H1 (cell line): ENCODE measurements at regions of chr10 and their contacts with region 1.

Region 1: GRCh38 chr10:15901889-15902288 is 41.6 kb upstream of the MINDY3 start:
- DNase-seq: peak in 1 of 2 experiments; percentile 25
- H3K4me3 ChIP-seq: no peak overlapping the region
- H3K27ac ChIP-seq: no peak overlapping the region
- H3K4me1 ChIP-seq: no peaks in the 10 kb centered on the region
- H3K27me3 ChIP-seq: no peaks in the 10 kb centered on the region
- CTCF ChIP-seq: no peak
- EP300 ChIP-seq: no peak
- POLR2A ChIP-seq: no peak
- RAD21 ChIP-seq: no peak

Region 2: DNA sequence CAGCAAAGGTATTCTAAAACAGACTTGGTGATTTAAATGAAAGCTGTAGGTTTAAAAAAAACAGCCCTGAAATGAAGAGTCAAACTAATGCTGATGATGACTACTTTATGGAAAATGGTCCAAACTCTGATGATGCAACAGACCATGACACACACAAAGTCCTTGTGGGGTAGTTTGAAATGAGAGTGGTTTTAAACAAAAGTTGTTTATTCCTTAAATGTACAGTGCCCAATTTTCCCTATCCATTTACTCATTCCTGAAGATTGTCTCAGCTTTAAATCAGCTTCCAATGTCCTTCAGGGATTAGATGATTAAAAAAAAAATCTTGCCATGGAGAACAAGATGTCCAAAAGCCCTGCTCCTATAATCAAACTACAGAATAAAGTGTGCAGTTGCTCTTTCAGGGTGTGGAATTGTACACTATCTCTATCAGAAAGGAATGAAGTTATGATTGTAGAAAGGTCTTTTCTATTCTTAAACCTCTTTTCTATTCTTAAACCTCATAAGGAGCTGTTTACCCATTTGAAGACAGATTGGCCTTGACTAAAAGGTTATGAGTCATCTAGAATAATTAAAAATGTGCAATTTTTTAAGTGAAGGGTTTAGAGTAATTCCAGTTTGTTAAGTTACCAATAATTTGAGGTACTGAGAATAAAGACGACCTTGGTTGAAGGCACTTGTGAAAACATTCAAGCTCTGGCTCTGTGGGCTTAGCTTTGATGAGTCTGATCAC is 111.9 kb before region 1 on chr10:
- CTCF ChIA-PET with region 1: no interaction called
- POLR2A ChIA-PET with region 1: no interaction called
- DNase-seq: no peak
- H3K4me3 ChIP-seq: no peak overlapping the region
- H3K27ac ChIP-seq: no peak overlapping the region
- H3K4me1 ChIP-seq: peaks cover 0 to 2% (median under 1%) of the 10 kb centered on the region in 4 experiments; a peak in 1 of 7 replicates
- H3K27me3 ChIP-seq: no peaks in the 10 kb centered on the region
- CTCF ChIP-seq: no peak
- EP300 ChIP-seq: no peak
- POLR2A ChIP-seq: no peak
- RAD21 ChIP-seq: no peak

Region 3: DNA sequence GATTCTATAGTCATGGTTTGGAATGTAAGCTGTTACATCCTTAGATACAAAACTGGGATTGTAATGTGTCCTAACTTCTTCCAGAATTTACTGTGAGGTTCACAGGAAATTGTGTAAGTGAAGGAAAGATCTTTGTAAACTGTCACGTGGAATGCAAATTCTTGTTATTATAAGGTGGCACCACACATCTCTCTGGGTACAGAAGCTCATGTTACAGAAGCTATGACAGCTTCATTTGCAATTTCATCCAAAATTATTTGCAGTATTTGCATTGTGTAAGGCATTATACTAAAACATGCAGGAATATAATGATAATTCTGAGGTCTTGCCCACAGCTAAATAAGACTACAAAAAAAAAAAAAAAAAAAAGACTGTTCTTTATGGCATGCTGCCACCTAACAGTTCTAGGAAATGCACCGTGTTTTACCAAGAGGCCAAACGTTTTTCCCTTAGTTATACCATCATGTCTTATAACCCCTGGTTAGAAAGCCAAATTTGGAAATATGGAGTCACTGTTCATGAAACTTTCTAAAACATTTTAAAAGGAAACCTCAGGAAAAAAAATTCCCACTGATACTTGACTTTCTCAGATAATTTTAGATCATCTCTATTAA is 59.2 kb before region 1 on chr10:
- CTCF ChIA-PET with region 1: no interaction called
- POLR2A ChIA-PET with region 1: no interaction called
- DNase-seq: no peak
- H3K4me3 ChIP-seq: no peak overlapping the region
- H3K27ac ChIP-seq: no peak overlapping the region
- H3K4me1 ChIP-seq: no peaks in the 10 kb centered on the region
- H3K27me3 ChIP-seq: peaks cover 0 to 2% (median 0%) of the 10 kb centered on the region in 4 experiments; a peak in 1 of 7 replicates
- CTCF ChIP-seq: no peak
- EP300 ChIP-seq: no peak
- POLR2A ChIP-seq: no peak
- RAD21 ChIP-seq: no peak

Region 4: GRCh38 chr10:15868016-15868415 is 33.9 kb before region 1 on chr10:
- CTCF ChIA-PET with region 1: no interaction called
- POLR2A ChIA-PET with region 1: no interaction called
- DNase-seq: no peak
- H3K4me3 ChIP-seq: no peak overlapping the region
- H3K27ac ChIP-seq: no peak overlapping the region
- H3K4me1 ChIP-seq: no peaks in the 10 kb centered on the region
- H3K27me3 ChIP-seq: peaks cover 4 to 43% (median 21%) of the 10 kb centered on the region in 4 experiments
- CTCF ChIP-seq: no peak
- EP300 ChIP-seq: no peak
- POLR2A ChIP-seq: no peak
- RAD21 ChIP-seq: no peak

Region 5: GRCh38 chr10:15881542-15881941 is 20.3 kb before region 1 on chr10:
- CTCF ChIA-PET with region 1: interaction called, 16 read pairs
- POLR2A ChIA-PET with region 1: no interaction called
- DNase-seq: no peak
- H3K4me3 ChIP-seq: no peak overlapping the region
- H3K27ac ChIP-seq: no peak overlapping the region
- H3K4me1 ChIP-seq: peaks cover 2 to 10% (median 3%) of the 10 kb centered on the region in 4 experiments; a peak in 5 of 7 replicates
- H3K27me3 ChIP-seq: no peaks in the 10 kb centered on the region
- CTCF ChIP-seq: no peak
- EP300 ChIP-seq: no peak
- POLR2A ChIP-seq: no peak
- RAD21 ChIP-seq: no peak

Region 6: DNA sequence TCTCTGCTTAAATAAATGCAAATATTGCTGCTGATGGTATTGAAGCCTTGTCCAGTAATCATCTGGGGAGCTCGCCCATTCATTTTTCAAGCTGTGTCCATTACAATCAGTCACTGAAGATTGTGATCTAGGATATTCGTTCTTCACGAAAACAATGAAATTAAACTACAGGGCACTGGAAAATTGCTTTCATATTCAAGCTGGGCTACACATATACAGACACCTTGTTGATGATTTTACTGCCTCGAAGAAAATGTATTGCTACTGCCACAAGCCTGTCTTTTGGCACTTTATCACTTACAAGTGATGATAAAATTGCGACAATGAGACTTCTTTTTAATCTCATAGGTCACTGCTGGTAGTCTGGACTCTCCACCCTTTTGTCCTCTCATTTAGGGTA is 58.4 kb after region 1 on chr10:
- CTCF ChIA-PET with region 1: no interaction called
- POLR2A ChIA-PET with region 1: no interaction called
- DNase-seq: no peak
- H3K4me3 ChIP-seq: no peak overlapping the region
- H3K27ac ChIP-seq: no peak overlapping the region
- H3K4me1 ChIP-seq: no peaks in the 10 kb centered on the region
- H3K27me3 ChIP-seq: no peaks in the 10 kb centered on the region
- CTCF ChIP-seq: no peak
- EP300 ChIP-seq: no peak
- POLR2A ChIP-seq: no peak
- RAD21 ChIP-seq: no peak

Region 7: DNA sequence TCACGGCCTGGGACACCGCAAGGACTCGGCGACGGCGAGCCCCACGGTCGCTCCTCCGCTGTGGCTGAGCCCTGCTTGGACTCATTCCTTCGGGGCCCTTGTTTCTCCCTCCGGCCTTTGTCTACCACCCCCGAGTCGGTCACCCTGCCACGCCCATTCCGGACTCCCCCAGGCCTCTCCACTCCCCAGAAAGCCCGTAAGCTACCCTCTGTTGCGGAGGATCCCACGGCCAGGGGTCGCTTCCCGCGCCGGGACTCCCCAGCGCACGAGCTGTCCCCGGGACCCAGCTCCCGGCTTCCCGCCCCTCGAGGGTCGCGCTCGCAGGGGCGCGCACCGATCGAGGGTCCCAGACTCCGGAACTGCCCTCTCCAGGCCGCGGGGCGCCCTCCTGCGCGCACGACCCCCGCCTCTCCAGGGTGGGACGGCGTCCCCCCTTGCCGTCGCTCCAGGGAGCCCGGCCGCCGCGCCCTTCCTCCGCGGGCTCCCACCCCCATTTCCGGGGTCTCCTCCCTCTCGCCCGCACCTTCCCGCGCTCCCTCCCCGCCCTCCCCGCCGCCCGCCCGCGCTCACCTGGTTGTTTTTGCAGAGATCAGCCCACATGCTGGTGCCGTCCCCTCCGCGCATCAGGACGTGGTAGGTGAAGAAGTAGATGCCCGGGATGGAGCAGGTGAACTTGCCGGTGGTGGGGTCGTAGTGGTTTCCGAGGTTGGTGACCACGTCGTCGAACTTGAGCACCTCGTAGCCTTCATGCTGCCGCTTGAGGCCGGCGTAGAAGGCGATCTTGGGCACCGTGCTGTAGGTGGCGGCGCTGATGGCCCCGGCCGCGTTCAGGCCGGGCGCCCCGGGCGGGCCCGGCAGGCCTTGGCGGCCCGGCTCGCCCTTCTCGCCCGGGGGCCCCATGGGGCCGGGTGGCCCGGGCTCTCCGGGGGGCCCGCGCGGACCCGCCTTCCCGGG is 618.3 kb after region 1 on chr10:
- CTCF ChIA-PET with region 1: interaction called, 11 read pairs
- POLR2A ChIA-PET with region 1: interaction called, 3 read pairs
- DNase-seq: peak in 1 of 2 experiments; percentile 62
- H3K4me3 ChIP-seq: peak overlapping the region; percentile 55 to 72 (median 64)
- H3K27ac ChIP-seq: no peak overlapping the region
- H3K4me1 ChIP-seq: peaks cover 4 to 14% (median 6%) of the 10 kb centered on the region in 4 experiments
- H3K27me3 ChIP-seq: peaks cover 14 to 48% (median 35%) of the 10 kb centered on the region in 4 experiments
- CTCF ChIP-seq: no peak
- EP300 ChIP-seq: no peak
- POLR2A ChIP-seq: no peak
- RAD21 ChIP-seq: no peak